HCT116 (cell line): ENCODE measurements at regions of chr15 and their contacts with region 1.

Region 1: GRCh38 chr15:69031013-69032001 is 16.8 kb downstream of the NOX5 start:
- DNase-seq: peak; percentile 65
- ATAC-seq: peak; percentile 91
- H3K4me3 ChIP-seq: peak overlapping the region; percentile 44 to 59
- H3K27ac ChIP-seq: no peak overlapping the region
- H3K4me1 ChIP-seq: peaks cover 7 to 49% of the 10 kb centered on the region in 2 experiments; a peak in 3 of 4 replicates
- H3K27me3 ChIP-seq: no peaks in the 10 kb centered on the region
- CTCF ChIP-seq: peak; percentile 47 to 71 (median 71); a peak in 5 of 6 replicates
- POLR2A ChIP-seq: no peak
- RAD21 ChIP-seq: peak; percentile 61

Region 2: DNA sequence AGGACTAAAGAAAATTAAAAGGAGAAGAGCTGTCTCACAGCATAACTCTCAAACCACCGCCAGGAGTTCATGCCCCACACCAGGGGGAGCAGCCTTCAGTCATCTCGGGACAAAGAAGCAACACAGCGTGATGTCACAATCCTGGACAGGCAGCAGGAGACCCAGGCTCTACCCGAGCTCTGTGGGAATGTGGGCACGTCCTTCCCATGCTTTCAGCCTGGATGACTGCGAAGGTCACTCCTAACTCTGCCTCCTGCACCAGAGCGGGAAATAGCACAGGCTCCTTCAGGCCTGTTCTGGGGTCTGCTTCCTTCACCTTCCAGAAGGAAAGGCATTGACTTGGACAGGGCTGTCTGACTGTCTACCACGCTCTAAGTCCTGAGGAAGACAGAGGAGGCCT is 14.5 kb after region 1 on chr15:
- CTCF ChIA-PET with region 1: interaction called, 12 read pairs
- POLR2A ChIA-PET with region 1: interaction called, 4 read pairs
- RAD21 ChIA-PET with region 1: no interaction called
- intact Hi-C with region 1: no loop called
- DNase-seq: no peak
- ATAC-seq: peak; percentile 94
- H3K4me3 ChIP-seq: no peak overlapping the region; a peak in 1 of 4 replicates
- H3K27ac ChIP-seq: no peak overlapping the region
- H3K4me1 ChIP-seq: peaks cover 13 to 34% of the 10 kb centered on the region in 2 experiments; a peak in 3 of 4 replicates
- H3K27me3 ChIP-seq: no peaks in the 10 kb centered on the region
- CTCF ChIP-seq: peak; percentile 5 to 52 (median 44); a peak in 5 of 6 replicates
- POLR2A ChIP-seq: no peak
- RAD21 ChIP-seq: no peak

Region 3: DNA sequence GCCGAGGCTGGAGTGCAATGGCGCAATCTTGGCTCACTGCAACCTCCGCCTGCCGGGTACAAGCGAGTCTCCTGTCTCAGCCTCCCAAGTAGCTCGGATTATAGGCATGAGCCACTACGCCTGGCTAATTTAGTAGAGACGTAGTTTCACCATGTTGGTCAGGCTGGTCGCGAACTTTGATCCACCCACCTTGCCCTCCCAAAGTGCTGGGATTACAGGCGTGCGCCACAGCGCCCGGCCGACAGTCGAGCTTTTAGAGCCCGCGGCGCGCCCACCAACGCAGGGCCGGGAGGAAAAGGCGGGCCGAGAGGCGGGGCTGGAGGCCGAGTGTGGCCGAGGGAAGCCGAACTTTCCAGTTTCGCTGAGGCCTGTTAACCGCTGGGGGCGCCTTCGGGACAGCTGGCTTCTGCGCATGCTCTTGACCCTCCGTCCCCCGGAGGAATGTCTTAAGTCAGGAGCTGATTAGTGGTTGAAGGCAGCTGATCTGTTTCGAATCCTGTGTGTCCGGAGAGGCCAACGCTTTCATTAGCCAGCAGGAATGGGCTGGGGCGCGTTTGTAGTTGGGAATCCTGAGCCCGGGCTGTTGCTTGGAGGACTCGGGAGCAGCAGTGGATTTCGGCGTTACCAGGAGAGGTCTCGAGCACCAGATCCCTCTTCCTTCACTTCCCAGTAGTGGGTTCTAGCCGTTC is 431.3 kb after region 1 on chr15:
- CTCF ChIA-PET with region 1: interaction called, 15 read pairs
- POLR2A ChIA-PET with region 1: no interaction called
- RAD21 ChIA-PET with region 1: no interaction called
- intact Hi-C with region 1: no loop called
- DNase-seq: peak; percentile 93
- ATAC-seq: peak; percentile 90
- H3K4me3 ChIP-seq: peak overlapping the region; percentile 55 to 66
- H3K27ac ChIP-seq: peak overlapping the region; percentile 75
- H3K4me1 ChIP-seq: peaks cover 10 to 35% of the 10 kb centered on the region in 2 experiments
- H3K27me3 ChIP-seq: no peaks in the 10 kb centered on the region
- CTCF ChIP-seq: peak; percentile 25 to 80 (median 80); a peak in 5 of 6 replicates
- POLR2A ChIP-seq: peak; percentile 50
- RAD21 ChIP-seq: no peak